IMR-90 (cell line): ENCODE measurements at regions of chr9 and their contacts with region 1.

Region 1: GRCh38 chr9:33130508-33130911 is 36.6 kb downstream of the B4GALT1 start:
- DNase-seq: peak; percentile 46
- ATAC-seq: no peak
- H3K4me3 ChIP-seq: no peak overlapping the region
- H3K27ac ChIP-seq: no peak overlapping the region
- H3K4me1 ChIP-seq: peaks cover 15% of the 10 kb centered on the region
- H3K27me3 ChIP-seq: no peaks in the 10 kb centered on the region
- CTCF ChIP-seq: no peak
- POLR2A ChIP-seq: no peak
- RAD21 ChIP-seq: no peak

Region 2: GRCh38 chr9:33106827-33107621 is 23.5 kb before region 1 on chr9:
- CTCF ChIA-PET with region 1: no interaction called
- POLR2A ChIA-PET with region 1: no interaction called
- dilution Hi-C with region 1: no loop called
- in situ Hi-C with region 1: no loop called
- intact Hi-C with region 1: loop called (anchors 2 kb)
- DNase-seq: peak; percentile 89
- ATAC-seq: peak; percentile 77
- H3K4me3 ChIP-seq: no peak overlapping the region
- H3K27ac ChIP-seq: peak overlapping the region; percentile 86
- H3K4me1 ChIP-seq: peaks cover 18% of the 10 kb centered on the region
- H3K27me3 ChIP-seq: no peaks in the 10 kb centered on the region
- CTCF ChIP-seq: no peak
- POLR2A ChIP-seq: no peak
- RAD21 ChIP-seq: no peak